AG04449 (cell line): ENCODE measurements at regions of chr11 and their contacts with region 1.

Region 1: GRCh38 chr11:129766898-129767604 is 48.6 kb upstream of the TMEM45B start:
- DNase-seq: no peak
- H3K4me3 ChIP-seq: no peak overlapping the region
- CTCF ChIP-seq: peak; percentile 59

Region 2: GRCh38 chr11:129750349-129751292 is 16.4 kb before region 1 on chr11:
- CTCF ChIA-PET with region 1: interaction called, 23 read pairs
- POLR2A ChIA-PET with region 1: no interaction called
- DNase-seq: no peak
- H3K4me3 ChIP-seq: peak overlapping the region; percentile 42
- CTCF ChIP-seq: peak; percentile 88